Activated B cell treated with CpG ODN at 0.5 μM for 24 hours (primary cell): ENCODE measurements at regions of chr16 and their contacts with region 1.

Region 1: DNA sequence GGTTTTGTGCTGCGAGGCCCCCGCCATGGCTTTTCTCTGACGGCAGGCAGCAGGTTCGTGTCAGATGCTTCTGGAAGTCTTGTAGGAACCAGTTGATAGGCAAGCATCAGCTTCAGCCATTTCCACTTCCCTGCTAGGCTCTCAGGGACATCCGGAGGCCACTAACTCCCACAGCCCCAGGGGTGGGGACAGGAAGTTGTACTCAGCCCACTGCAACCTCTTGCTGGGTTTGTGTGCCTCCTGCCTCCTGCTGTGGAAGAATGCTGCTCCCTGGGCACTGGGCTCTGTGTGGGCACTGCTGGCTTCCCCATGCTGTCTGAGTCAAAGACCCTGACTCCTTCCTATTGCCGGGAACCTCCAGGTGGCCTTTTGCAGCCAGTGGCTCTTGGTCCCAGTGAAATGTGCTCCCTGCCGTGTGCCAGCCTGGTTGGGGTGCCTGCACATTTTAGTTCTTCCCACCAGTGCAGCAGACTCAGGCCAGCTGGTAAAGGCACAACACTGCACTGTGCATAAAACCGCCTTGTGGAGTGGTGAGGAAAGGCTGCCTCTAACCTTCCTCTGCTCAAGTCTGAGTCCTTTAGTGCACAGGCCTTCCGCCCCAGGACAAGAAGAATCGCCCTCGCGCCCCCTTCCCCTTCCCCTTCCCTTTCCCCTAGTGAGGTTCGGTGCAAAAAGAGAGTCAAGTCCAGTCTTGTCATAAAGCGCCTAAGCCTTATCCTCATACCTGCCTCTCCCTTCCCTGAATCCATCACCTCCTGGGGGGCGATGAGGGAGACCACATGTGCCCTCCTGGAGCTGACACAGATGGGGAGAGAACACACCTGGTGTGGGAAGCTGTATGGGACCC is 16.6 kb downstream of the LDHD start:
- DNase-seq: no peak
- ATAC-seq: no peak
- H3K4me3 Mint-ChIP-seq: no peak overlapping the region
- H3K27ac Mint-ChIP-seq: no peak overlapping the region
- H3K4me1 Mint-ChIP-seq: peaks cover 18% of the 10 kb centered on the region
- H3K27me3 Mint-ChIP-seq: peaks cover 22% of the 10 kb centered on the region
- CTCF ChIP-seq: no peak

Region 2: DNA sequence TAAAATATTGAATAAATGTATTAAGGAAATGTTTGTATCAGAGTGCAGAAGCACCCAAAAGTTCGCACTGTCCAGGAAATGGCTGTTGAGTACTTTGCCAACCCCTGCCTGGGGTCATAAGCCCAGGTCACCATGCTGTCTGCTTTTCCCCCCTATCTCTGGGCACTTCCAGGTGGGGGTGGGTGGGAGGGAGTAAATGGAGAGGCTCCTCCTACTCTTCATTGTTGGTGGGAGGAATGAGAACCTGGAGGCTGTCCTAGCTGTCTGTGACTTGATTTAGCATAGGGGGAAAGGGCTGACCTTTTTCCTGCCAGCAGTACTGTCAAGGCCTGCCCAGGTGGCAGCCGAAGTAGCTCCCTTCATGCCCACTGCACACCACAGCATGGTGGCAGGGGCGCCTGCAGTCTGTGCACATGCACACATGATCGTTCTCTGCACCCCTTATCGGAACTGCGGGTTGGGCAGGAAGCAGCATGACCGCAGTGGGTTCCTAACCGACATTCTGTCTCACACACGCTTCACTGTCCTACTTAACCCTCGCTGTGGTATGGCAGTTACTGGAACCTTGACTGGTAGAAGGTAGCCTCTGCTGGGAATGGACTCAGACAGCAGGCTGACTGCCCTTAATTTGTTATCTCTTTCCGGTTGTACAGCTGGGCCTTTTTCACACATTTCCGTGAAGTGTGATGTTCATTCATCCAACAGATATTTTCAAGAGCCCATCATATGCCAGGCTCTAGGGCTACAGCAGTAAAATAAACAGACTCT is 24.9 kb before region 1 on chr16:
- CTCF ChIA-PET with region 1: no interaction called
- POLR2A ChIA-PET with region 1: interaction called, 3 read pairs
- intact Hi-C with region 1: loop called (anchors 1 kb)
- DNase-seq: peak; percentile 37
- ATAC-seq: peak; percentile 95
- H3K4me3 Mint-ChIP-seq: peak overlapping the region; percentile 0
- H3K27ac Mint-ChIP-seq: peak overlapping the region; percentile 36
- H3K4me1 Mint-ChIP-seq: peaks cover 36% of the 10 kb centered on the region
- H3K27me3 Mint-ChIP-seq: peaks cover 24% of the 10 kb centered on the region
- CTCF ChIP-seq: no peak

Region 3: GRCh38 chr16:75192601-75193297 is 92.8 kb after region 1 on chr16:
- CTCF ChIA-PET with region 1: no interaction called
- POLR2A ChIA-PET with region 1: no interaction called
- intact Hi-C with region 1: no loop called
- DNase-seq: no peak
- ATAC-seq: no peak
- H3K4me3 Mint-ChIP-seq: no peak overlapping the region
- H3K27ac Mint-ChIP-seq: no peak overlapping the region
- H3K4me1 Mint-ChIP-seq: no peaks in the 10 kb centered on the region
- H3K27me3 Mint-ChIP-seq: peaks cover 32% of the 10 kb centered on the region
- CTCF ChIP-seq: no peak